ENCODE measurements at regions of chr3 and their contacts with region 1.

Region 1: GRCh38 chr3:40452876-40453730 is 4.0 kb upstream of the RPL14 start:
- DNase-seq: peak; percentile 98
- H3K4me3 Mint-ChIP-seq: peak overlapping the region; percentile 93
- H3K27ac Mint-ChIP-seq: peak overlapping the region; percentile 97
- H3K4me1 Mint-ChIP-seq: peaks cover 24% of the 10 kb centered on the region
- H3K27me3 Mint-ChIP-seq: peaks cover 2% of the 10 kb centered on the region

Region 2: GRCh38 chr3:39962581-39962980 is 490.5 kb before region 1 on chr3:
- intact Hi-C with region 1: no loop called
- DNase-seq: no peak
- H3K4me3 Mint-ChIP-seq: no peak overlapping the region
- H3K27ac Mint-ChIP-seq: no peak overlapping the region
- H3K4me1 Mint-ChIP-seq: no peaks in the 10 kb centered on the region
- H3K27me3 Mint-ChIP-seq: peaks cover 3% of the 10 kb centered on the region

Region 3: GRCh38 chr3:40309418-40309924 is 143.6 kb before region 1 on chr3 and contains the start of gene EIF1B:
- intact Hi-C with region 1: loop called (anchors 1 kb)
- DNase-seq: peak; percentile 100
- H3K4me3 Mint-ChIP-seq: peak within 1 kb of the TSS; percentile 100
- H3K27ac Mint-ChIP-seq: peak within 1 kb of the TSS; percentile 99
- H3K4me1 Mint-ChIP-seq: peaks cover 17% of the 10 kb centered on the region
- H3K27me3 Mint-ChIP-seq: no peaks in the 10 kb centered on the region
- total RNA-seq, gene EIF1B: 46.1 and 47.7 TPM in 2 replicates

Region 4: DNA sequence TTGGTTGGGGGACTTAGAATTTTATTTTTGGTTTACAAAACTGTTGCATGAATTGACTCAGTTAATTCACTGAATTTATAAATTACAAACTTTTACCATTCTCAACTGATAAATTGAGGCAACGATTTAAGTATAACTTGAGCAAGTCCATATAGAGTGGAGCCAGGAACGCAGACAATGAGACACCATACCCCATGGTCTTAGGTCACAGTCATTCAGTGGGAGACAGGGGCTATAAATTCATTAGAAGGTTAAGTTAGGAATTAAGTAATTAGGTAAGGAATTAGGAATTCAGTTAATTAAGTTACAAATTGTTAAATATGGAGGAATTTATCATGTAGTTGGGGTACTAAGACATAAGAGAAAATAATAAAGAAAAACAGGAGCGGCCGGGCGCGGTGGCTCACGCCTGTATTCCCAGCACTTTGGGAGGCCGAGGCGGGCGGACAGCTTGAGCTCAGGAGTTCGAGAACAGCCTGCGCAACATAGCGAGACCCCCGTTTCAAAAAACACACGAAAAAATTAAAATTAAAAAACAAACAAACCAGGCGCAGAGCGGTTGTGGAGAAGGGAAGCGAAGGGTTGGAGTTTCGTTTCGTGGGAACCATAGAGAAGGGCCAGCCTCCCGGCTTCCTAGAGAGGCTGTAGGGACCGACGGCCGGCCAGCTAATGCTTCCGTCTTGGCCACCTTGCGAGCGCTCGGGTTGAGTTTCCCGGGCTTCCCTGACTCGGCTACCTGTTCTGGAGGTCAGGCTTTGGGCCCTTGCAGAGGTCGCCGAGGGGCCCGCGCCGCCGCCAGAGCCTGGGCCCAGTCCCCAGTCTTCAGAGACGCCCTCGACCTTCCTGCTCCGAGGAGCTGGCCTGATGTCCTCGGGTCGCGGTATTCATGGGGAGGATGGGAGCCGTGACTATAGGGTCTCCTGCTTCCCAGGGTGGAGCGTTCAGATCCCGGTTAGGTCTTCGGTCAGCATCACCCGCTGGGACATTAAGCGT is 23.7 kb after region 1 on chr3 and contains the start of gene ZNF619:
- intact Hi-C with region 1: loop called (anchors 1 kb)
- DNase-seq: peak; percentile 89
- H3K4me3 Mint-ChIP-seq: peak within 1 kb of the TSS; percentile 89
- H3K27ac Mint-ChIP-seq: peak within 1 kb of the TSS; percentile 83
- H3K4me1 Mint-ChIP-seq: peaks cover 20% of the 10 kb centered on the region
- H3K27me3 Mint-ChIP-seq: peaks cover 5% of the 10 kb centered on the region
- total RNA-seq, gene ZNF619: 6.1 and 8.4 TPM in 2 replicates

Region 5: DNA sequence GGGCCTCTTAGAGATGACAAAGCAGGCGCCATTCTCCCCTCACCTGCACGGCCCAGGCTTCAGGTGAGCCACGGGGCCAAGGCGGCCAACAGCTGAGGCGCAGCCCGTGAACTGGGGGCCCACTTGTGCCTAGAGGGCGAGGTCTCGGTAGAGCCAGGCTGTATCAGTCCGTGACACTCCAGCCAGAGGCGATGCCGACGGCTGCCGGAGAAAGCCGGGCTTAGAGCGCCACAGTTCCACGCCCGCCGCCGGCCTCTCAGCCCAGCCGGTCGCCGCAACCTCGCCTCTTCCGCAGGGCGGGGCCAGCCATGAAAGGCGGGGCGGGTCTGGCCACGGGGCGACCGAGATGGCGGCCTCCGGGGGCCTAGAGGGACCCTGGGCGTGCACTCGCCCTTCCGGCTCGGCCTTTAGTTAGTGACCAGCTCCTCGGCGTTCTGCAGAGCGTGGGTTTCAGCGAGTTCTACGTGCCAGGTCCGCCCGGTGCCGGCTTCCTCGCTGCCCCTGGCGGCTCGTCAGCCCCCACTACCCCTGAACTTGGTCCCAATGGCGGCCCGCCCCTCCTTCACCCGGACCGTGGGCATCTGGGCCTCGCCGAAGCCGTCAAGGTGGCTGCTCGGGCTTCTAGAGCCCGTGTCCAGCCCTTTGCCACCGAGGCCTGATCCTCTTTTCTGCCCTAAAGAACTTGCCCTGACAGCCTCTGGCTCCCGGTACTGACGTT is 71.6 kb after region 1 on chr3 and contains the start of gene ZNF621:
- intact Hi-C with region 1: loop called (anchors 1 kb)
- DNase-seq: peak; percentile 97
- H3K4me3 Mint-ChIP-seq: peak within 1 kb of the TSS; percentile 92
- H3K27ac Mint-ChIP-seq: peak within 1 kb of the TSS; percentile 93
- H3K4me1 Mint-ChIP-seq: peaks cover 20% of the 10 kb centered on the region
- H3K27me3 Mint-ChIP-seq: no peaks in the 10 kb centered on the region
- total RNA-seq, gene ZNF621: 18.6 and 19.2 TPM in 2 replicates

Measured in activated CD4-positive, alpha-beta T cell treated with anti-CD3 and anti-CD28 coated beads, Interleukin-2, amount 10 ng/mL, durations not matched to agents 24 days and 14 days (primary cell).